ENCODE measurements at regions of chr12 and their contacts with region 1.

Region 1: DNA sequence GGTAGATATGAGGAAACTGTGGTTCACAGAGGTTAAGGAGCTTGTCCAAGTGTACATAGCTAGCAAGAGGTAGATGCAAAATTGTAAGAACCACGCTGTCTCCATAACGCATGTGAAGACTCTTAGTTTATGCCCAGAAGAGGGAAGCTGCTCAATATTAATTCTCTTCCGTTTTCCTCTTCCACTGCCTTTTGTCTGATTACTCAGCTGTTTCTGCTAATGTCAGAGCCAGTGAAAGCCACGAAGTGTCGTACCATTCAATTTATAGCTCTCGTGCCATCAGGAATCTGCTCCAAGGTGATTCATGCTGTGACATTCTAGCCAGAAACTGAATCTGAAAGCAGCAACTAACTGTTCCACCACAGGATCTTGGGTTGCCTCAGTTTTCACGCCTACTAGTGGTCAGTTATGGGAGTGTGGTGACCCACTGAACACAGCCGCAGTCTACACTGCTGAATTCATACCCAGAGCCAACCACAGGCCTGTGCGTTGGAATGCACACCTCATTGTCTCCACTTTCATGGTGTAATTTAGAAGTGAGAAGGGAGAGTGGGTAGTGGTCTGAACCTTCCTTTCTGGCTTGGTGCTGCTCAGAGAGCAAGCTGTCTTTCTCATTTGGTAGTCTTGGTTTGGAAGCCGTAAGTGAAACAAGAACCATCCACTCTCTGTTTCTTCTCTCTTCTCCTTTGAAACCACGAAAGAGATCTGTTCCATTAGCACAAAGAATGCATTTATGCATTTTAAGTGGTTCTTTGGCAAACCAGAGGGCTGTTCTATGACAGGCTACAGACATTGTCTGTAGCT is 74.2 kb upstream of the NAP1L1 start:
- DNase-seq: peak; percentile 36
- H3K4me3 ChIP-seq: no peak overlapping the region
- CTCF ChIP-seq: peak; percentile 76

Region 2: DNA sequence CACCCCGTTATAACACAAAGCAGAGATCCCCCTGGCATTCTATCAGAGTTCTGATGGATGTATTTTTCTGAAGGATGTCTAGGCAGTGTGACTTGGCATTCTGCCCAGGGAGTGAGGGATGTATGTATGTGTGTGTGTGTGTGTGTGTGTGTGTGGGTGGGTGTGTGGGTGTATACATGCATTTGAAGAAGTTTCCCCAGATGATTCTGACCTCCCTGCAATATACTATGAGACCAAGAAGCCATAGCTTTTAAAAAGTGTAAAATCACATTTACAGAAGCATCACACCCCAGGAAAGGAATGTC is 14.5 kb before region 1 on chr12:
- CTCF ChIA-PET with region 1: interaction called, 19 read pairs
- POLR2A ChIA-PET with region 1: no interaction called
- DNase-seq: no peak
- H3K4me3 ChIP-seq: no peak overlapping the region
- CTCF ChIP-seq: no peak

Region 3: GRCh38 chr12:76176940-76177339 is 18.2 kb after region 1 on chr12:
- CTCF ChIA-PET with region 1: interaction called, 14 read pairs
- POLR2A ChIA-PET with region 1: no interaction called
- DNase-seq: no peak
- H3K4me3 ChIP-seq: no peak overlapping the region
- CTCF ChIP-seq: no peak

Region 4: GRCh38 chr12:76348079-76348901 is 189.6 kb after region 1 on chr12 and contains the start of gene BBS10:
- CTCF ChIA-PET with region 1: interaction called, 15 read pairs
- POLR2A ChIA-PET with region 1: no interaction called
- DNase-seq: peak; percentile 31
- H3K4me3 ChIP-seq: peak within 1 kb of the TSS; percentile 84
- CTCF ChIP-seq: peak; percentile 59